B cell (primary cell): ENCODE measurements at regions of chr11 and their contacts with region 1.

Region 1: DNA sequence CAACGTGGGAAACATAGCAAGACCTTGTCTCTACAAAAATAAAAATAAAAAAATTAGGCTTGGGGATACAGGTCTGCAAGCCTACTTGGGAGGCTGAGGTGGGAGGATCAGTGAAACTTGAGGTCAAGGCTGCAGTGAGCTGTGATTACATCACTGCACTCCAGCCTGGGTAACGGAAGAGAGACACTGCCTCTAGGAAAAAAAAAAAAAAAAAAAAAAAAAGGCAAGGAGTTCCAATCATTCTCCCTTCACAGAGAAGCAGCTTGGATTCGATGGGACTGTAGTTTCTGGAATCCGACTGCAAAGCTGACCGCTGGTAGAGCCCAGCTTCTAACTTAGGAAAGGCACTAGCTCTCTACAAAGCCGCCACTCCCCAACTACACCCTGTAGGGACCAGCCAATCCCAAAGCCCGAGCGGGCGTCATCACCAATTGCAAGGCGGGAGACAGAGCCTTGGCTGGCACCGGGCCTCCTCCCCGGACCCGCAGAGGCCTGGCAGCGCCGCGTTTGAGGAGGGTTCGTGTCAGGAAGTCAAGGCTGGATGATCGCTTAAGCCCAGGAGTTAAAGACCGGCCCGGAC is 699 bp upstream of the DDB2 start:
- DNase-seq: peak; percentile 88
- ATAC-seq: peak; percentile 79
- H3K4me3 ChIP-seq: peak overlapping the region; percentile 71 to 92 (median 76)
- H3K4me3 Mint-ChIP-seq: peak overlapping the region; percentile 98
- H3K27ac ChIP-seq: peak overlapping the region; percentile 89
- H3K27ac Mint-ChIP-seq: peak overlapping the region; percentile 98
- H3K4me1 ChIP-seq: peaks cover 14 to 31% of the 10 kb centered on the region in 2 donors
- H3K4me1 Mint-ChIP-seq: peaks cover 30% of the 10 kb centered on the region
- H3K27me3 ChIP-seq: no peaks in the 10 kb centered on the region
- H3K27me3 Mint-ChIP-seq: no peaks in the 10 kb centered on the region
- CTCF ChIP-seq: no peak

Region 2: DNA sequence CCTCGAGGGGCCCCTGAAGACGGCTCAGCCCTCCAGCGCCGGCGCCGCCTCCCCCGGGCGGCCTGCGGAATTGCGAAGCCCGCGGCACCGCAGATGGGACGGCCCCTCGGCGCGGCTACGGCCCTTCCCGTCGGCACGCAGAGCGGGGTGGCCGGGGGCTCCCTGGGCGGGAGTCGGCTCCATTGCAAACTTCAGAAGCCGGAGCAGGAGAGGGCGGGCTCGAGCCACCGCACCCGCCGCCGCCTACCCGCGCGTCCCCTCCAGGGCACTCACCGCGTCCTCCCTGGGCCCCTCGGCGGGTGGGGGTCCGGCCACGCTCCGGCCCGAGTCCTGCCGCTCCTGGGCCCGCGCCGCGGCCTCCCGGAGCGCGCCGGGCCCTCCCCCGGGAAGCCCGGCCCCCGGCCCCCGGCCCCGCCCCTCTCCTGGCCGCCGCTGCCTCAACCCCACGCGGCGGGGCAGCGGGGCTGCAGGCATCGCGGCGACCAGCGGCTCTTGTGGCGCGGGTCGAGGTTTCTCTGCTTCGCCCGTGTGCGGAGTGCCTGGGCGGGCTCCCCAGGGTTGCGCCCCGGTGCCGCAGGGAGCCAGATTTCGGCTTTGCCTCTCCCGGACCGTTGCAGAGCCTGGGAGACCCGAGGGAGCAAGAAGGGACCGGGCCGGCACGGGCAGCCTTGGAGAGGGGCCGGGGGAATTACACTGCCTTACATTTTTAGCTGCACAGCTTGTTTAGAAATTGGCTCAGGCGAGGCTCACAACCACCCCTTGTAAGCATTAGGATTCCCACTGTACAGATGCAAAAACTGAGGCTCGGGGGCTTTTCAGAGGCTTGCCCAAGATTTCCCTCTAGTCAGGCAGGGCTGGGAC is 27.8 kb before region 1 on chr11 and contains the start of gene PACSIN3:
- CTCF ChIA-PET with region 1: interaction called, 7 read pairs
- POLR2A ChIA-PET with region 1: interaction called, 10 read pairs
- intact Hi-C with region 1: loop called (anchors 1 kb)
- DNase-seq: peak; percentile 65
- ATAC-seq: peak; percentile 80
- H3K4me3 ChIP-seq: peak within 1 kb of the TSS in 4 of 5 experiments; percentile 31 to 65 (median 54)
- H3K4me3 Mint-ChIP-seq: peak within 1 kb of the TSS; percentile 87
- H3K27ac ChIP-seq: no peak within 1 kb of the TSS
- H3K27ac Mint-ChIP-seq: peak within 1 kb of the TSS; percentile 2
- H3K4me1 ChIP-seq: peaks cover 19 to 24% of the 10 kb centered on the region in 2 donors
- H3K4me1 Mint-ChIP-seq: peaks cover 12% of the 10 kb centered on the region
- H3K27me3 ChIP-seq: peaks cover 0 to 44% (median 15%) of the 10 kb centered on the region in 4 experiments
- H3K27me3 Mint-ChIP-seq: peaks cover 18% of the 10 kb centered on the region
- CTCF ChIP-seq: no peak
- total RNA-seq, gene PACSIN3: 1.3 and 2.1 TPM in 2 replicates

Region 3: DNA sequence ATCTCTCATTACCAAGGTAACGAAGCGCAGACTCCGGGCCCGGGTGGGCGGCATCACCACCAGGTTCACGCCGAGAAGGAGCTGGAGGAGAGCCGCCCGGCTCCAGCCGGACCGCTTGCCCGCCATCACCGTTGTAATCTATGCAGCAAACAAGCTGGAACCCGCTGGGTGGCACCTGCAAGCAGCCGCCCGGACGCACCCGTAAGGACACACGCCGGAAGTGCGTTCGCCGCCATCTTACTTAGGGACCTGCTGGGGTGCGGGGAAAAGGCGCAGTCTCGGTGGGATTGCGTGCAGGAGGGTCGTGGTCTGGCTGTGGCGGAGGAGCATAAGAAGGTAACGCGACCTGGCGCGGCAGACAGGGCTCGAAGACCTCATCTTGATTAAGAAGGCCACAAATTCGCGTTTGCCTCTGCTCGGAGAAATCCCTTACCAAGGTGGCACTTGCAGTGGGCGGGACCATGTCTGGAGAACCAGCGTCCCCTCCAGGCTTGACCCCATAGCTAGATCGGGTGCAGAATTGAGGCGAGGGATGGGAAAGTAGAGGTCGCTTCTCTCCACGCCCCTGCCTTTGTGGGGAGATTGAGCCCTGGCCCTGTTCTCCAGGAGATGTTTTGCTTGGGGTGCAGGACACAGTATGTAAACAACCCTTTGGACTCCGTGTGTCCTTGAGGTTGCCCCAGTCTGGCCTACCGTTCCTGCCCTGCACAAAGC is 34.7 kb after region 1 on chr11 and contains the start of gene ACP2:
- CTCF ChIA-PET with region 1: interaction called, 15 read pairs
- POLR2A ChIA-PET with region 1: interaction called, 29 read pairs
- intact Hi-C with region 1: loop called (anchors 1 kb)
- DNase-seq: peak; percentile 94
- ATAC-seq: peak; percentile 94
- H3K4me3 ChIP-seq: peak within 1 kb of the TSS; percentile 65 to 99 (median 90)
- H3K4me3 Mint-ChIP-seq: peak within 1 kb of the TSS; percentile 99
- H3K27ac ChIP-seq: peak within 1 kb of the TSS; percentile 56 to 79
- H3K27ac Mint-ChIP-seq: peak within 1 kb of the TSS; percentile 99
- H3K4me1 ChIP-seq: peaks cover 13 to 22% of the 10 kb centered on the region in 2 donors
- H3K4me1 Mint-ChIP-seq: peaks cover 24% of the 10 kb centered on the region
- H3K27me3 ChIP-seq: no peaks in the 10 kb centered on the region
- H3K27me3 Mint-ChIP-seq: no peaks in the 10 kb centered on the region
- CTCF ChIP-seq: no peak
- total RNA-seq, gene ACP2: 23.5 and 29.5 TPM in 2 replicates

Region 4: DNA sequence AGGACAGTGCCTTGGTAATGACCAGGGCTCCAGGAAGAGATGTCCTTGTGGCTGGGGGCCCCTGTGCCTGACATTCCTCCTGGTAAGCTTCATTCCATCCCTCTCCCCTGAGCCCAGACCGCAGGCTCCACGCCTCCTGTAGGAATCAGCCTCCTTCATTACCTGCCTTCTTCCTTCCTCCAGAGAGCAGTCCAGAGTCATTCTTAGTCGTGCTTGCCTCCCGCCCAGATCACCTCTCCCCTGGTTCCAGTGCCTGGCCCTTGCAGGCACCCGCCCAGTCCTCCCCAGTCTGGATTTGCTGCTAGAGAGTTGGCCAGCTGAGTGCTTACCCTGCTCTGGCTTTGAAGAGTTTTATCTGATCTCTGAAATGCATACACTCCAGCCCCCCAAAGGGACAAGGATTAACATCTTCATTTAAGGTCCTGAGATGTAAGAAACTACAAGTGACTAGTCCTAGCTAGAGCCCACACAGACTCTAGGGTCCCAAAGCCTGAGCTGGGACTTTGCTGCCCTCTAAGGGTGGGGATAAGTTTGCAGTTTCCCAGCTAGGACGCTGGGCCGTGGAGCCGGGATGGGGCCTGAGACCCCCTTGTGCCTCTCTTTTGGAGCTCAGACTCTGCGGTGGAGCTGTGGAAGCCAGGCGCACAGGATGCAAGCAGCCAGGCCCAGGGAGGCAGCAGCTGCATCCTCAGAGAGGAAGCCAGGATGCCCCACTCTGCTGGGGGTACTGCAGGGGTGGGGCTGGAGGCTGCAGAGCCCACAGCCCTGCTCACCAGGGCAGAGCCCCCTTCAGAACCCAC is 45.3 kb after region 1 on chr11:
- CTCF ChIA-PET with region 1: interaction called, 16 read pairs
- POLR2A ChIA-PET with region 1: interaction called, 8 read pairs
- intact Hi-C with region 1: no loop called
- DNase-seq: peak; percentile 38
- ATAC-seq: peak; percentile 72
- H3K4me3 ChIP-seq: no peak overlapping the region
- H3K4me3 Mint-ChIP-seq: no peak overlapping the region
- H3K27ac ChIP-seq: no peak overlapping the region
- H3K27ac Mint-ChIP-seq: no peak overlapping the region
- H3K4me1 ChIP-seq: no peaks in the 10 kb centered on the region
- H3K4me1 Mint-ChIP-seq: peaks cover 2% of the 10 kb centered on the region
- H3K27me3 ChIP-seq: no peaks in the 10 kb centered on the region
- H3K27me3 Mint-ChIP-seq: no peaks in the 10 kb centered on the region
- CTCF ChIP-seq: peak; percentile 42

Region 5: DNA sequence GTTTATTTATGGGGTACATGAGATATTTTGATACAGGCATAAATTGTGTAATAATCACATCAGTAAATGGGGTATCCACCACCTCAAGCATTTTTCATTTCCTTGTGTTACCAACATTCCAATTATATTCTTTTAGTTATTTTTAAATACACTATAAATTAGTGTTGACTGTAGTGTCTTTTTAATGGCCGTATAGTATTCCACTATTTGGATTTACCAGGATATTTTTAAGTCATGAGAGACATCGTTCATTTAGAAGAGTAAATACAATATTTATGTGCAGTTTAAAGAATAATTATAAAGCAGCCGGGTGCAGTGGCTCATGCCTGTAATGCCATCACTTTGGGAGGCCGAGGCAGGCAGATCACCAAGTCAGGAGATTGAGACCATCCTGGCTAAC is 170.4 kb after region 1 on chr11:
- CTCF ChIA-PET with region 1: no interaction called
- POLR2A ChIA-PET with region 1: no interaction called
- intact Hi-C with region 1: no loop called
- DNase-seq: no peak
- ATAC-seq: no peak
- H3K4me3 ChIP-seq: no peak overlapping the region
- H3K4me3 Mint-ChIP-seq: no peak overlapping the region
- H3K27ac ChIP-seq: no peak overlapping the region
- H3K27ac Mint-ChIP-seq: no peak overlapping the region
- H3K4me1 ChIP-seq: peaks cover 1 to 4% of the 10 kb centered on the region in 2 donors
- H3K4me1 Mint-ChIP-seq: peaks cover 3% of the 10 kb centered on the region
- H3K27me3 ChIP-seq: no peaks in the 10 kb centered on the region
- H3K27me3 Mint-ChIP-seq: no peaks in the 10 kb centered on the region
- CTCF ChIP-seq: no peak